Activated naive CD4-positive, alpha-beta T cell treated with anti-CD3 and anti-CD28 coated beads, Interleukin-2, amount 10 ng/mL, durations not matched to agents 7 days and 5 days (primary cell): ENCODE measurements at regions of chr19 and their contacts with region 1.

Region 1: DNA sequence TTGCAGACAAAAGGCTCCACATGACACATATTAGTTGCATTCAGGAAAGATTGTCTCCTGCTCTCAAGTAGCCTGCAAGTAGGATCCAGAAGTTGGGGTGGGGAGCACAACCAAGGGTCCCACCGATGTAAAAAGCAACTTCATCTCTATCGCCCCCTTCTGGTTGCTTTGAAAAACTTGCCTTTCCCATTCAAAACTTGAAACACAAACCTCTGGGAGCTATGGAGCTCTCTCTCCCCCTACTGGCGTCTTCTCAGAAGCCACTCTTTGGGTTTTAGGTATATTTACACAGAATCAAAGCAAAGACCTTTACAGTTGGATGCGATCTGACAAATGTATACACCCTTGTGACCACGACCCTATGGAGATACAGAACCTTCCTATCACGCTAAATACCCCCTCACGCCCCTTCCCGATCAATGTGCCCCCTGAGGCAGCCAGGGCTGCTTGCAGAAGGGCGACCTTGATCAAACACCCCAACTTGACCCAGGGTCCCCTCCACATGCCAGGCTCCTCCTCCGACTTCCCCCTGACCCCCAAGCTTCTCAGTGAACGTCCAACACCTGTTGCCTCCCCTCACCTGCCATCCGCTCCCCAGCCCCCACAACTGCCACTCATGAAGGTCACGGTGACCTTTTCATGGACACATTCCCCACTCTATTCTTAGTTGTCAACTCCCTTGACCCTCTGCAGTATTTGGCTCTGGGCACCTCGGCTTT is 10.1 kb downstream of the NOSIP start:
- DNase-seq: peak; percentile 88
- H3K4me3 Mint-ChIP-seq: peak overlapping the region; percentile 49
- H3K27ac Mint-ChIP-seq: peak overlapping the region; percentile 98
- H3K4me1 Mint-ChIP-seq: peaks cover 80% of the 10 kb centered on the region
- H3K27me3 Mint-ChIP-seq: no peaks in the 10 kb centered on the region

Region 2: DNA sequence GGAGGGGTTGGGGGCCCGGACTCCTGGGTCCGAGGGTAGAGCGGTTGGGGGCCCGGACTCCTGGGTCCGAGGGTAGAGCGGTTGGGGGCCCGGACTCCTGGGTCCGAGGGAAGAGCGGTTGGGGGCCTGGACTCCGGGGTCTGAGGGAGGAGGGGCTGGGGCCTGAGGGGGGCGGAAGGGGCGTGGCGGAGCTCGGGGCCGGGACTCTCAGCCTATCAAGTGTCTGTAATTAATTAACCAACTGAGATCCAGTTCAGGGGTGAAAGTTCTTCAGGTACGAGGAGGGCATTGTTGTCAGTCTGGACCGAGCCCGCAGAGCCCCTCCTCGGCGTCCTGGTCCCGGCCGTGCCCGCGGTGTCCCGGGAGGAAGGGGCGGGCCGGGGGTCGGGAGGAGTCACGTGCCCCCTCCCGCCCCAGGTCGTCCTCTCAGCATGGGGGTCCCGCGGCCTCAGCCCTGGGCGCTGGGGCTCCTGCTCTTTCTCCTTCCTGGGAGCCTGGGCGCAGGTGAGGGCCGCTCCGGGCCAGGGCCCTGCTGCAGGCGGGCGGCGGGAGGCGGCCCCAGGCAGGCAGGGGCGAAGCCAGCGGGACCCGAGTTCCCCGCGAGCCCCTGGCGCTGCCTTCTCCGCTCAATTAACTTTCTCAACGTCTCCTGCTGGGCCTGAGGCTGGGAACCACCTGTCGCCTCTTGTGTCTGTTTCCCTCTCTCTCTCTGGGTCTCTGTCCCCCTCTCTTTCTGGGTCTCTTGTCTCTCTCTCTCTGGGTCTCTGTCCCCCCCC is 57.1 kb before region 1 on chr19:
- CTCF ChIA-PET with region 1: interaction called, 17 read pairs
- DNase-seq: peak; percentile 57
- H3K4me3 Mint-ChIP-seq: peak overlapping the region; percentile 75
- H3K27ac Mint-ChIP-seq: peak overlapping the region; percentile 55
- H3K4me1 Mint-ChIP-seq: peaks cover 33% of the 10 kb centered on the region
- H3K27me3 Mint-ChIP-seq: peaks cover 28% of the 10 kb centered on the region

Region 3: DNA sequence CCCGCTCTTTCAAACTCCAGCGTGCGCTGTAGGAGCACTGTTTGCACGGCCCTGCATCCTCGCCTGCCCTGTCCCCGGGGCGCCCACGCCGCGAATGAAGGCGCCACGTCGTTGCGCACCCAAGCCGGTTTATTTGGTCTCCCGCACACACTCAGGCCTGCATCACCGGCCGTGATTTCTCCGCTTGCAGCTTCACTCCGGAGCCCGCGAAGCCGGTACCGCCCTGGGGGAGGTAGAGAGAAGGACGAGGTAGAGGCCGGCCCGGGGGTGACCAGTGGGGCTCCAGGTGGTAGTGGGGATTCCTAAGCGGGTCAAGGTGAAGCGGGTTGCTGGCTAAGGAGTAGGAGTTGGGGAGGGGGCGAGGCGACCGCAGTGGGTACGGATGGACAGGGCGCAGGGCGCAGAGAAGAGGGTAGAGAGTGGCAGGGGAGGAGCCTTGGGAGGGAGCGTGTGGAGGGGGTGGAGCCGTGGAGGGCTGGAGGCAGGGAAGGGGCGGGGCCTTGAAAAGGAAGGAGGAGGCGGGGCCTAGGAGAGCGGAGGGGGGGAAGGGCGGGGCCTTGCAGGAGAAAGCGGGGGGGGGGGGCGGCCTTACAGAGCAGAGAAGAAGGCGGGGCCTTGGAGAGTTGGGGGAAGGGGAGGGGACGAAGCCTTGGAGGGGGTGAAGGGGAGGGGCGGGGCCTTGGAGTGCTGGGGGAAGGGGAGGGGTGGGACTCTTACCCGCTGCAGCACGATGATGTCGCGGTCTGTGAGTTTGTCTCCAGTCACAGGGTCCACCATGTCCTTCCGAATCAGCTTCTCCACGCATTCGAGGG is 14.5 kb before region 1 on chr19:
- CTCF ChIA-PET with region 1: interaction called, 60 read pairs
- DNase-seq: peak; percentile 95
- H3K4me3 Mint-ChIP-seq: peak overlapping the region; percentile 53
- H3K27ac Mint-ChIP-seq: peak overlapping the region; percentile 98
- H3K4me1 Mint-ChIP-seq: peaks cover 84% of the 10 kb centered on the region
- H3K27me3 Mint-ChIP-seq: no peaks in the 10 kb centered on the region

Region 4: DNA sequence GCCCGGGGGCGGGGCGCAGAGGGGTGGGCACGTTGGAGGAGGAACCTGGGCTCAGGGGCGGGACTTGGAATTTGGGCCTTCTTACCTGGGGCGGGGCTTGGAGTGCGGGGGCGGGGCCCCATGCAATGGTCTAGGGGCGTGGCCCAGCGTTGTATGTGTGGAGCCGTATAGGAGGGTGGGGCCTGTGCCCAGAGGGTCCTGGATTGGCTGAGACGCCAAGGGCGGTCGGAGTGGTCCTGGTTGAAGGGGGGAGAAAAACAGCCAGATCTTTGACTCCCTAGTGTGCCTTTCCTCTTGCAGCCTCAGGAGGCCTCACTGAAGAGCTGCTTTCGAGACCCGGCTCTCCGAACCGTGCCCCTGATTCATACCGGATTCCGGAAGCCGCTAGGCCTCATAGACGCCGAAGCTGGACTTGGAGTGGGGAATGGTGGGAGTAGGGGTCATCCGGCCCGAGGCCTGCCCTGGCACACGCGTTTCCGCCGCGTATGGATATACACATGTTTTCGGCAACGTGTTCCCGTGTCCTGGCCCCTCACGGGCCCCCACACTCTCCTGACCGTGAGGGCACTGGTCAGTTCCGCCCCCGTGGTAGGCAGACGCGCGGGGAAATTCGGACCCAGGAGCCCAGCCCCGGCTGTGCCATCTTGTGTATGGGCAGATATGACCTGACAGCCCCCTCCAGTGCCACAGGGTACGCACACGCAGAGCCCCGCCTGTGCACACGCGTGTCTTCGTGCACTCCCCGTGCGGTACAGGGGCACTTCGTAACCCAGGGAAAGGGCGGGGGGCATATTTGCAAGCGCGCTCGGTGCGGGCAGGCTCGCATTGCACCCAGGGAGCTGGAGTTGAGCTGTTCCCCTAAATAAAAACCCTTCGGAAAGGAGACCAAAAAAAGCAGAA is 20.0 kb after region 1 on chr19:
- CTCF ChIA-PET with region 1: no interaction called
- DNase-seq: peak; percentile 97
- H3K4me3 Mint-ChIP-seq: peak overlapping the region; percentile 91
- H3K27ac Mint-ChIP-seq: peak overlapping the region; percentile 96
- H3K4me1 Mint-ChIP-seq: peaks cover 40% of the 10 kb centered on the region
- H3K27me3 Mint-ChIP-seq: peaks cover 35% of the 10 kb centered on the region

Region 5: DNA sequence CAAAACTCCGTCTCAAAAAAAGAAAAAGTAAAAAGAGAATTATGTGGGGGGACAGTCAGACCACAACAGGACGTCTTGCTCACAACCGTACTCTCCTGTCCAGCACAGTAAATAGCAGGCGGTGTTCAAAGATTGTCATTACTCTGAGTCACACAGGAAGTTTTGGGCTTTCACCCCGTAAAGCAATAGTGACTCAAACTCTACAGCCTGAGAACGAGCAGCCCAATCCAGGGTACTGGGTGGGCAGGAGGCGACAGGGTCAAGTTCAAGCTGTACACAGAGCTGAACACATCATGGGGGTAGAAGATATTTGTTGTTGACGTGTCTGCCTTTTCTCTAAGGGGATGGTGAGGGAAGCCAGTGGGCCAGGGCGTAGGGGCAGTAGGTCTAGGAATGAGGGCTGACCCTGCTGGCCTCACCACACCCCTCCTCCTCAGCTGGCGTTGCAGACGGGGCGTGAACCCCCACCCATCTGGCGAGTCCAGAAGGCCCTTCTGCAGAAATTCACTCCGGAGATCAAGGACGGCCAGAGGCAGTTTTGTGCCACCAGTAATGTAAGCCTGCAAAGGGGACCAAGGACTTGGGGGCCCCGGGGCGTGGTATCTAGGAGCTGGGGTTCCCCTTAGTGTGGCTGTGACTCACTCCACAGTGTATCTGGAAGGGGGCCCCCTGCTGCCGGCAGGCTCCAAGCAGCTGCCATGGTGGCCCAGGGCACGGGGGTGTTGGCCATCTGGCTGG is 44.0 kb after region 1 on chr19:
- CTCF ChIA-PET with region 1: no interaction called
- DNase-seq: no peak
- H3K4me3 Mint-ChIP-seq: no peak overlapping the region
- H3K27ac Mint-ChIP-seq: no peak overlapping the region
- H3K4me1 Mint-ChIP-seq: peaks cover 3% of the 10 kb centered on the region
- H3K27me3 Mint-ChIP-seq: no peaks in the 10 kb centered on the region

Region 6: DNA sequence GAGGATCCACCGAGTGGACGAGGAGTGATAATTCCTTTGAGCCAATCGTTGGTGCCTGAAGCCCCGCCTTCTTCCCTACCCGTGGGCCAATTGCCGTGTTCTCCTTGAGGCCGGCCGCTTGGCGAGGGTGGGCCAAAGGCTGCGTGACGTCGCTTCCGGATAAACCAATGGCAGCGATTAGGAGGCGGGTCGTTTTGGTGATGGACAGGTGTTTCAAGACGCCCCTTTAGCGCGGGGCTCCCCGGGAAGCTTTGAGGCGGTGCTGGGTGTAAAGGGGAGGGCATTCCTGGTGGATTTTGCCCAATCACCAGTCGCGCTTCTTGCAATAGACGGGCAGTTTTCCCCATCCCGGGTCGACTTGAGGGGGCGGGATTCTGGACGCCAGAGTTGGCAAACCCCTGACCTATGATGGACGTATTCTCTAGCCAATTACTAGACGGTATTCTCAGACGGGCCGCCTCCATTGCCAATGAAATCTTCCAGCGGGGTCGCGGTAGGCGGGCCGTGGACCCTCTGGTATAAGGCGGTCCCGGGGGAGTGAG is 106.5 kb after region 1 on chr19:
- CTCF ChIA-PET with region 1: interaction called, 42 read pairs
- DNase-seq: peak; percentile 99
- H3K4me3 Mint-ChIP-seq: peak overlapping the region; percentile 90
- H3K27ac Mint-ChIP-seq: peak overlapping the region; percentile 97
- H3K4me1 Mint-ChIP-seq: peaks cover 42% of the 10 kb centered on the region
- H3K27me3 Mint-ChIP-seq: no peaks in the 10 kb centered on the region